Ovary (tissue), 10 donors: ENCODE measurements at regions of chr7 and their contacts with region 1.

Region 1: DNA sequence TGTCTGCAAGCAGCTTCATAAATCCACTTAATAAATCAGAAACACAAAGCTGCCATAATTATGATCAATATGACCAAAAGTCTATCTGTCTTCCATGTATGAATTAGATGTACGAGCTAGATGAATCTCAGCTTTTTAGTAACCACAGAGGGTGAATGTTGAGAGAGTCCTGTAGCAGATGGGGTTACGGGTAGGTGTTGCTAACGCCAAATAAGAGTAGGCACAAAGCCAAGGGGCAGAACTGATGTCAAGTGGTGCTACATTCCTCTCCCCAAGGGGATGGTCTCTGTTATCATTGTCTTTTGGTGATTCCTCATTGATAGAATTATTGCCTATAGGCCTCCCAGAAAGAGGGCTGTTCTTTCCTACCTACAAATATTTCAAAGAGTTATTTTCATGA is 257.8 kb downstream of the PCLO start:
- DNase-seq: no peak
- H3K4me3 ChIP-seq: no peak overlapping the region
- H3K27ac ChIP-seq: no peak overlapping the region
- H3K4me1 ChIP-seq: no peaks in the 10 kb centered on the region
- H3K27me3 ChIP-seq: no peaks in the 10 kb centered on the region
- CTCF ChIP-seq: no peak
- EP300 ChIP-seq: no peak
- POLR2A ChIP-seq: no peak

Region 2: DNA sequence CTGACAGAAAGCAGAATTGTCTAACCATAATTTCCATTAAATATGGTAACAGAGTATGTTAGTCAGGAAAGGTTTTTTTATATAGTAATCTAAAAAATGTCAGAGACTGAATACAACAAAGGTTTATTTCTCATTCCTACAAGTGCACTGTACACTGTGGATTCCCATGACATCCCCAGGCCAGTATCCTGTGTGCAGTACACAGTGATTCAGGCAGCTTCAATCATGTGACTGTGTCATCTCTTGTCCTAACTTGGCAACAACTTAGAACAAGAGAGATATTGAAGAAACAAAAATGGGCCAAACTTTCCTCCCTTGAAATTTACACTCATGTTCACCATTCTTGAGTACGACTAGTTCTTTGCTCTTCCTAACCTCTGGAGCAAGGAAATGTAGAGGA is 1479.5 kb after region 1 on chr7:
- intact Hi-C with region 1: loop called in 1 of 4 experiments (anchors 5 kb)
- DNase-seq: no peak
- H3K4me3 ChIP-seq: no peak overlapping the region
- H3K27ac ChIP-seq: no peak overlapping the region
- H3K4me1 ChIP-seq: no peaks in the 10 kb centered on the region
- H3K27me3 ChIP-seq: no peaks in the 10 kb centered on the region
- CTCF ChIP-seq: no peak
- EP300 ChIP-seq: no peak
- POLR2A ChIP-seq: no peak